CD4-positive, alpha-beta T cell (primary cell): ENCODE measurements at regions of chr12 and their contacts with region 1.

Region 1: DNA sequence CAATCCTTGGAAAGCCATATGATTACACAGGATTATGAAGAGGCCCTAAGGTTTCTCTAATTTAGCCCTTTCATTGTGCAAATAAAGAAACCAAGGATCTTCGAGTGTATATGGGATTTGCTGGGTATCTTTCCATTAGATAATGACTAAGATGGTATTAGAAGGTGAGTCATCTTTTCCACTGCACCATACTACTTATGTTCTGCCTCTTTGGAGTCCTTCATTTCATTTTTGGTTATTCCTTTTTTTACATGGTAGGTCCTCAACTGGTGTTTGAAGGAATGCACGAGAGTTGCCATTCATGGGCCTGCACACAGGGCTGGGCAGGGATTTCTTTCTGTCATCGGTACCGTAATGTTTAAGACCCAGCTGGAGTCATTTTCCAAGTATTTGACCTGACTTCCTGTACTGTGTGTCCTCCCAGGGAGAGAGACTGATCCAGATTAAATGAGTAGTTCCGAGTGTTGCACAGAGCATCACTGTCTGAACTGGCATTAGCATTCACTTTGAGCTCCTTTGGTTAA is 85.7 kb downstream of the BORCS5 start:
- DNase-seq: peak in 3 of 14 experiments; percentile 47 to 52 (median 52)
- ATAC-seq: peak; percentile 1
- H3K4me3 ChIP-seq: no peak overlapping the region
- H3K4me3 Mint-ChIP-seq: peak overlapping the region; percentile 45
- H3K27ac ChIP-seq: peak overlapping the region; percentile 83
- H3K27ac Mint-ChIP-seq: peak overlapping the region; percentile 95
- H3K4me1 ChIP-seq: peaks cover 74% of the 10 kb centered on the region
- H3K4me1 Mint-ChIP-seq: peaks cover 81% of the 10 kb centered on the region
- H3K27me3 ChIP-seq: no peaks in the 10 kb centered on the region
- H3K27me3 Mint-ChIP-seq: no peaks in the 10 kb centered on the region
- CTCF ChIP-seq: no peak

Region 2: GRCh38 chr12:12384571-12385340 is 57.9 kb before region 1 on chr12:
- CTCF ChIA-PET with region 1: interaction called, 3 read pairs
- POLR2A ChIA-PET with region 1: interaction called, 10 read pairs
- intact Hi-C with region 1: loop called in 1 of 2 experiments (anchors 1 kb)
- DNase-seq: peak in 5 of 14 experiments; percentile 17 to 70 (median 32)
- ATAC-seq: peak; percentile 19
- H3K4me3 ChIP-seq: no peak overlapping the region
- H3K4me3 Mint-ChIP-seq: peak overlapping the region; percentile 56
- H3K27ac ChIP-seq: peak overlapping the region in 1 of 2 donors; percentile 65
- H3K27ac Mint-ChIP-seq: peak overlapping the region; percentile 79
- H3K4me1 ChIP-seq: peaks cover 15% of the 10 kb centered on the region
- H3K4me1 Mint-ChIP-seq: peaks cover 61% of the 10 kb centered on the region
- H3K27me3 ChIP-seq: no peaks in the 10 kb centered on the region
- H3K27me3 Mint-ChIP-seq: no peaks in the 10 kb centered on the region
- CTCF ChIP-seq: no peak

Region 3: GRCh38 chr12:12432364-12432763 is 10.2 kb before region 1 on chr12:
- CTCF ChIA-PET with region 1: no interaction called
- POLR2A ChIA-PET with region 1: interaction called, 13 read pairs
- intact Hi-C with region 1: no loop called
- DNase-seq: no peak
- ATAC-seq: no peak
- H3K4me3 ChIP-seq: no peak overlapping the region
- H3K4me3 Mint-ChIP-seq: no peak overlapping the region
- H3K27ac ChIP-seq: no peak overlapping the region
- H3K27ac Mint-ChIP-seq: peak overlapping the region; percentile 68
- H3K4me1 ChIP-seq: peaks cover 30% of the 10 kb centered on the region
- H3K4me1 Mint-ChIP-seq: peaks cover 74% of the 10 kb centered on the region
- H3K27me3 ChIP-seq: no peaks in the 10 kb centered on the region
- H3K27me3 Mint-ChIP-seq: no peaks in the 10 kb centered on the region
- CTCF ChIP-seq: no peak

Region 4: GRCh38 chr12:12456637-12457036 is 14.0 kb after region 1 on chr12:
- CTCF ChIA-PET with region 1: interaction called, 4 read pairs
- POLR2A ChIA-PET with region 1: interaction called, 35 read pairs
- intact Hi-C with region 1: loop called in 1 of 2 experiments (anchors 2 kb)
- DNase-seq: peak in 3 of 14 experiments; percentile 61 to 67 (median 63)
- ATAC-seq: peak; percentile 74
- H3K4me3 ChIP-seq: peak overlapping the region; percentile 29
- H3K4me3 Mint-ChIP-seq: peak overlapping the region; percentile 68
- H3K27ac ChIP-seq: peak overlapping the region in 1 of 2 donors; percentile 68
- H3K27ac Mint-ChIP-seq: peak overlapping the region; percentile 85
- H3K4me1 ChIP-seq: peaks cover 18% of the 10 kb centered on the region
- H3K4me1 Mint-ChIP-seq: peaks cover 42% of the 10 kb centered on the region
- H3K27me3 ChIP-seq: no peaks in the 10 kb centered on the region
- H3K27me3 Mint-ChIP-seq: no peaks in the 10 kb centered on the region
- CTCF ChIP-seq: no peak

Region 5: GRCh38 chr12:12474931-12475795 is 32.6 kb after region 1 on chr12:
- CTCF ChIA-PET with region 1: interaction called, 4 read pairs
- POLR2A ChIA-PET with region 1: interaction called, 31 read pairs
- intact Hi-C with region 1: loop called in 1 of 2 experiments (anchors 5 kb)
- DNase-seq: peak in 12 of 14 experiments; percentile 18 to 89 (median 44)
- ATAC-seq: peak; percentile 84
- H3K4me3 ChIP-seq: peak overlapping the region; percentile 38
- H3K4me3 Mint-ChIP-seq: peak overlapping the region; percentile 59
- H3K27ac ChIP-seq: peak overlapping the region; percentile 55 to 91
- H3K27ac Mint-ChIP-seq: peak overlapping the region; percentile 93
- H3K4me1 ChIP-seq: peaks cover 50% of the 10 kb centered on the region
- H3K4me1 Mint-ChIP-seq: peaks cover 57% of the 10 kb centered on the region
- H3K27me3 ChIP-seq: no peaks in the 10 kb centered on the region
- H3K27me3 Mint-ChIP-seq: no peaks in the 10 kb centered on the region
- CTCF ChIP-seq: no peak